Right ventricle myocardium inferior (tissue), 1 donor: ENCODE measurements at regions of chr7 and their contacts with region 1.

Region 1: GRCh38 chr7:129914536-129915272 is 38.1 kb downstream of the UBE2H start:
- DNase-seq: no peak
- ATAC-seq: peak; percentile 18

Region 2: DNA sequence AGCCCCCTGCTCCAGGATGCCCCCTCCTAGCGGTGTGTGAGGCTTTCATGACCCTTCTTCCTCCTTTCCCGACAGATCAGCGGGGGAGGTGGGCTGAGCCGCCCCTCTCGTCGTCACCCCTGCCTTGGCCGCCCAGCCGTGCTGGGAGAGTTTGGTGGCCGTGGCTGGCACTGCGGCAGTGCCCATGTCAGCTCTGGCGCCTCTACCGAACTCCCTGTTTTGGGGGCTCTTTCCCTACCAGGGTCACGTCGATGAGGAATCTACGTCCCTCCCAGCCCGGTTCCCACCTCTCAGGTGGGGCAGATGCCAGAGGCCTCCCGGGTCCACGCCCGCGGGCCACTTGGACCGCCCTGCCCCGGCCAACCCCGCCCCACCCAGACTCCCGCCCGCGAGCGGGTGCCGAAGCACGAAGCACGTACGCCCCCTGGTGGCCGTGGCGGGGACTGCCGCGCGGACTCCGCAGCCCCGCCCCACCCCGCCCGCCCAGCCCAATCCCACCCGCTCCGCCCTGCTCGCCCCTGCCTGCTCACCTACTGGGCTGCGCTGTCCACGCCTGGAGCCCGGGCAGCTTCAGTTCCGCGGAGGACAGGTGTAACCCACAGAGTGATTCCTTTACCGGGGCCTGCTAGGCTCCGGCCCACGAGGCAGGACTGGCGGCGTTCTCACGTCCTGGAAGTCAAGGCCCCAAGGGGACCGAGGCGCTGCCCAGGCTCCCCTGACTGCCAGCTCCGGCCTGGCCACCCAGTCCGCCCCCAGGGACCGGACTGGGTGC is 89.0 kb before region 1 on chr7:
- intact Hi-C with region 1: no loop called
- DNase-seq: peak; percentile 96
- ATAC-seq: peak; percentile 89

Region 3: GRCh38 chr7:129875745-129876411 is 38.8 kb before region 1 on chr7:
- intact Hi-C with region 1: loop called (anchors 5 kb)
- DNase-seq: no peak
- ATAC-seq: peak; percentile 38